Heart right ventricle (tissue), 16 donors: ENCODE measurements at regions of chr15 and their contacts with region 1.

Region 1: DNA sequence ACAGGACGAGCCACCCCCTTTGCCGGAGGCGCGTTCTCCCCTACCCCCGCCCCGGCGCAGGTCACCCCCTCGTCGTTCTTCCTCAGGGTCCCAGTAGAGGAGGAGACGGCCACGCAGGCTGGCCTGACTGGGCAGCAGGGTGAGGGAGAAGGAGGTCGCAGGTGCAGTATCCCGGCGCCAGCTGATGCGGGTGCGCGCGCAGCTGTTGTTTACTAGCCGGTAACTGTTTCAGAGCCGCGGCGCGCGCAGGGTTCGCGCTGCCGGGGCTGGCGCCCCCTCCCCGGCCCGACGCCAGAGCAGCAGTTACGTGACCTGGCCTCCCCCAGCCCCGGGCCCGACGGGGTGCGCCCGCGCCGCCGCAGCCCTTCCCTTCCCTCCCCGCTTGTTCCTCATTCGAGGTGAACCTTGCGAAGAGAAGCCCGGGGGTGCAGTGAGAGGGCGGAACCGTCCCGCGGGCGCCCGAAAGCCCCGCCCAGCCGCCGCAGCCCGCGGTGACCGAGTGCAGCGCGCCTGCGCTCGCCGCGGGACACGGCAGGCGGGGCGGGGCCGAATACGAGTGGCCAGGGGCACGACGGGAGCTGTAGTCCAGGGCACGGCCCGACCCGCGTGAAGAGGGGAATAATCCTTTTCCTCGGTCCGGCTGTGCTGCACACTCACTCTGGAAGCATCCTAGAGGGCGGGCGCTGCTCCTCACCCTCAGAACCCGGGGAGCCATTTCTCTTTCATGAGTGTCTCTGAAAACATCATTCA is at the start of gene SLC12A6:
- DNase-seq: peak; percentile 89 to 93
- ATAC-seq: peak; percentile 94 to 98 (median 96)
- H3K4me3 ChIP-seq: peak within 1 kb of the TSS; percentile 79 to 95 (median 92)
- H3K27ac ChIP-seq: peak within 1 kb of the TSS; percentile 83 to 99 (median 94)
- H3K4me1 ChIP-seq: peaks cover 7 to 86% (median 50%) of the 10 kb centered on the region in 9 donors
- H3K27me3 ChIP-seq: no peaks in the 10 kb centered on the region
- CTCF ChIP-seq: peak in 2 of 9 donors; percentile 8 to 11
- total RNA-seq, gene SLC12A6: 20.0 to 33.6 (median 26.0) TPM

Region 2: DNA sequence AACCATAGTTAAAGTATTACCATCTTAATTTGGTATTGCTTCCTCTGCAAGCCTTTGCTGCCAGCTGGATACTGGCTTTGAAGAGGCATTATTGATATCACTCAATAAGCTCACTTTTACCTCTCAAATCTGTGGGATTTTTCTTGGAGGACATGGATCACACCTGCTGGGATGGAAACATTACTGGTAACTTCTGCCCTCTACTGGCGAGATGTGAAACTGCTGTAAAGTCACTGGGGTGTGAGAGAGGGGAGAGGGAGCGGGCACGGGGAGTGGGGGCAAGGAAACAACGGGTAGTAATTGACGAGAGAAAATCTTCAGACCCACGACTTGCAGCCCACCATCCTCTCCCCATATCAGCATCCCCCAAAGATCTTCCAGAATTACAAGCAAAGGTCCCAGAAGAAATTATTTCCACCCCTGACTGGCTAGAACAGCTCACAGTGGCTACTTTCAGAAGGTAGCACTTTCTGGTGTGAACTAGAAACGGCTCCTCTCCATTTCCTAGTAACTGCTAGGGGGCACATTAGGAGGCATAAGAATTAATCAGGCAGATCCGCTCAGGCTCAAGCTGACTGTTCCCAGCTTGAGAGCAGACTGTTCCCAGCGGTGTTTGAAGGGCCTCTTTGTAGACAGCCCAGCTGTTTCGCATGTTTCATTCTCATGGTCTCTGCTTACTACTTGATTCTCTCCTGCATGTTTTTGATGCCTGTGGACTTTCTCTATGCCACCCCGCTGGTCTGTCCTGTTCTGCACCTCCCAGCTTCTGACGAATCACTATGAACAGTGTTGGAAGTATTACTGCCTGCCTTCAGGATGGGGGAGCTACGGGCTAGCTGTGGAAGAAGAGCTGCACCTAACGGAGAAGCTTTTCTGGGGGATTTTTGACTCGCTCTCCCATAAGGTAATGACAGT is 599.8 kb before region 1 on chr15:
- intact Hi-C with region 1: no loop called
- DNase-seq: peak in 1 of 2 donors; percentile 14
- ATAC-seq: peak in 2 of 8 donors; percentile 55 to 59
- H3K4me3 ChIP-seq: no peak overlapping the region
- H3K27ac ChIP-seq: no peak overlapping the region
- H3K4me1 ChIP-seq: peaks cover 0 to 5% (median 0%) of the 10 kb centered on the region in 9 donors
- H3K27me3 ChIP-seq: peaks cover 0 to 6% (median 0%) of the 10 kb centered on the region in 7 donors
- CTCF ChIP-seq: peak; percentile 49 to 79 (median 70)

Region 3: GRCh38 chr15:34223904-34224596 is 113.7 kb before region 1 on chr15:
- intact Hi-C with region 1: loop called in 2 of 10 experiments (anchors 1 to 5 kb)
- DNase-seq: peak in 1 of 2 donors; percentile 5
- ATAC-seq: peak in 7 of 8 donors; percentile 4 to 44 (median 17)
- H3K4me3 ChIP-seq: peak overlapping the region; percentile 62 to 94 (median 82)
- H3K27ac ChIP-seq: peak overlapping the region; percentile 76 to 97 (median 94)
- H3K4me1 ChIP-seq: peaks cover 3 to 26% (median 19%) of the 10 kb centered on the region in 9 donors
- H3K27me3 ChIP-seq: no peaks in the 10 kb centered on the region
- CTCF ChIP-seq: no peak

Region 4: DNA sequence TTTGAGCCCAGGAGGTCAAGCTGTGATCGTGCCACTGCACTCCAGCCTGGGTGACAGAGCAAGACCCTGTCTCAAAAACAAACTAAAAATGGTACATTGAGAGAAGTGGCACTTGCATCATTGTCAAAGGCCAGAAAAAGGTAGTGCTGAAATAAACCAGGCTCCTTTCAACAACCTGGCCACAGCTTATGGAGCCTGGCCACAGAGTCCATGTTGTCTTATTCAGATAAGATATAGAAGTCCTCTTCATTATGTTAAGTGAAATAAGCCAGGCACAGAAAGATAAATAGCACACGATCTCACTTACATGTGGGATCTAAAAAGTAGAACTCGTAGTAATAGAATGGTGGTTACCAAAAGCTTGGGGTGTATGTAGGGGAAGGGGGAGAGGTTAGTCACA is 78.2 kb before region 1 on chr15:
- intact Hi-C with region 1: loop called in 2 of 10 experiments (anchors 5 to 10 kb)
- DNase-seq: peak in 1 of 2 donors; percentile 33
- ATAC-seq: peak; percentile 54 to 93 (median 88)
- H3K4me3 ChIP-seq: no peak overlapping the region
- H3K27ac ChIP-seq: peak overlapping the region in 9 of 10 donors; percentile 39 to 78 (median 51)
- H3K4me1 ChIP-seq: peaks cover 0 to 31% (median 6%) of the 10 kb centered on the region in 9 donors
- H3K27me3 ChIP-seq: no peaks in the 10 kb centered on the region
- CTCF ChIP-seq: no peak

Region 5: DNA sequence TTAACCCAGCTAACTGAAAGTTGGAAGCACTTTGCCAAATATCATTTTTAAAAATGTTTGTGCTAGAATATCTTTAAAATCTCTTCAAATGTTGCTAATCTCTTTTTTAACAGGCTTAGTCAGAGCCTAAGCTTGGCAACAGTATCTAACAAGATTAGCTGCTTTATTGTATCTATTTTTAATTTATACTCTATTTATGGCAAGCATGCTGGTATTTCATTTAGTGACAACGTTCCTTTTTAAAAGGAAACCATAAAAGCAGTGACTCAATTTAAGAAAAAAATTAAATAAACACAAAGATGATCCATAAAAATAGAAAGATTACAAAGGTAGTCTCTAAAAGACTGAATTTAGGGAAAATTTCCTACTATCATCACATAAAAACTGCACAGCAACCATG is 40.7 kb before region 1 on chr15:
- intact Hi-C with region 1: no loop called
- DNase-seq: no peak
- ATAC-seq: peak in 4 of 8 donors; percentile 56 to 87 (median 66)
- H3K4me3 ChIP-seq: peak overlapping the region in 1 of 10 donors; percentile 11
- H3K27ac ChIP-seq: peak overlapping the region in 9 of 10 donors; percentile 21 to 76 (median 61)
- H3K4me1 ChIP-seq: peaks cover 0 to 36% (median 19%) of the 10 kb centered on the region in 9 donors
- H3K27me3 ChIP-seq: no peaks in the 10 kb centered on the region
- CTCF ChIP-seq: no peak

Region 6: GRCh38 chr15:34318277-34319079 is 19.3 kb before region 1 on chr15:
- intact Hi-C with region 1: loop called in 1 of 10 experiments (anchors 2 kb)
- DNase-seq: peak in 1 of 2 donors; percentile 72
- ATAC-seq: peak; percentile 93 to 99 (median 97)
- H3K4me3 ChIP-seq: peak overlapping the region in 9 of 10 donors; percentile 36 to 73 (median 57)
- H3K27ac ChIP-seq: peak overlapping the region in 9 of 10 donors; percentile 4 to 82 (median 63)
- H3K4me1 ChIP-seq: peaks cover 0 to 32% (median 29%) of the 10 kb centered on the region in 9 donors
- H3K27me3 ChIP-seq: no peaks in the 10 kb centered on the region
- CTCF ChIP-seq: no peak

Region 7: GRCh38 chr15:34650177-34650576 is 312.4 kb after region 1 on chr15:
- intact Hi-C with region 1: no loop called
- DNase-seq: no peak
- ATAC-seq: no peak
- H3K4me3 ChIP-seq: no peak overlapping the region
- H3K27ac ChIP-seq: no peak overlapping the region
- H3K4me1 ChIP-seq: no peaks in the 10 kb centered on the region
- H3K27me3 ChIP-seq: no peaks in the 10 kb centered on the region
- CTCF ChIP-seq: no peak